Activated naive CD4-positive, alpha-beta T cell treated with anti-CD3 and anti-CD28 coated beads for 36 hours (primary cell): ENCODE measurements at regions of chr7 and their contacts with region 1.

Region 1: GRCh38 chr7:41705109-41705901 is 2.4 kb upstream of the INHBA start:
- DNase-seq: peak; percentile 74
- H3K4me3 Mint-ChIP-seq: peak overlapping the region; percentile 50
- H3K27ac Mint-ChIP-seq: no peak overlapping the region
- H3K4me1 Mint-ChIP-seq: peaks cover 23% of the 10 kb centered on the region
- H3K27me3 Mint-ChIP-seq: peaks cover 66% of the 10 kb centered on the region

Region 2: GRCh38 chr7:40232242-40232893 is 1472.9 kb before region 1 on chr7:
- CTCF ChIA-PET with region 1: interaction called, 5 read pairs
- intact Hi-C with region 1: loop called (anchors 2 kb)
- DNase-seq: peak; percentile 52
- H3K4me3 Mint-ChIP-seq: no peak overlapping the region
- H3K27ac Mint-ChIP-seq: no peak overlapping the region
- H3K4me1 Mint-ChIP-seq: peaks cover 8% of the 10 kb centered on the region
- H3K27me3 Mint-ChIP-seq: no peaks in the 10 kb centered on the region

Region 3: DNA sequence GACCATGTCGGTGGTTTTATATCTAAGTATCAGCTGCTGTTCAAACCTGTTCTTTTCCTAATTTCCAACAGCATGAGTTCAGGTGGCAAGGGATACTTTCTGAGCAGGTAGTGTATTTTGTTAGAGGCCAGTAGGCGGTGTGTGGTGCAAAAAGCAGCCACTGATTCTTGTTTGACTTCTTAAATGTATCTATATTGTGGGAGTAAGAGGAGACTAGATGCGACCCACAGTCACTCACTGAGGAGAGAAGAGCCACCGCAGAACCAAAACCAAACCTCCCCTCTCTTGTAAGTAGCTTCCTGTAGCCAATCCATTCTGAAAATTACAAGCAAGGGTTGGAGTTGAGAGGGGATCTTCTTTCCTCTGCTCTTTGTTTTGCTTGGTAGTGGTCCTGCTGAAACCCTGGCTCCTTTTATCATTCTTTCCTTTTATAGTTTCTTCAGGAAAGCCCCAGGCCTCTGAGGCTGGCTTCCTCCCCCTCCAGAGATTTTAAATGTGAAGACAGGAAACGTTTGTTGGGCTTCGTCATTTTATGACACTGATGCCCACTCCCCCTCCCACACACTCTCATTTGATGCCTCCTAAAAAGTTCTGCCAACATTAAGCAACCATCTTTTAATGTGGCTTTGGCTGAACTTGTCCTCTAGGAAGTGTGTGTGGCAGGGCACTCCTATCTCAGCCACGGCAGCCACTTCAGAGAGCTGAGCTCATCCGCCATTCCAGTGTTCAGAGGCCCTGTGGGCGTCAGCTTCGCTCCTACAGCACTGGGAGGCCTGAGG is 1004.5 kb before region 1 on chr7:
- CTCF ChIA-PET with region 1: no interaction called
- intact Hi-C with region 1: loop called (anchors 10 kb)
- DNase-seq: peak; percentile 57
- H3K4me3 Mint-ChIP-seq: no peak overlapping the region
- H3K27ac Mint-ChIP-seq: peak overlapping the region; percentile 68
- H3K4me1 Mint-ChIP-seq: peaks cover 26% of the 10 kb centered on the region
- H3K27me3 Mint-ChIP-seq: no peaks in the 10 kb centered on the region

Region 4: DNA sequence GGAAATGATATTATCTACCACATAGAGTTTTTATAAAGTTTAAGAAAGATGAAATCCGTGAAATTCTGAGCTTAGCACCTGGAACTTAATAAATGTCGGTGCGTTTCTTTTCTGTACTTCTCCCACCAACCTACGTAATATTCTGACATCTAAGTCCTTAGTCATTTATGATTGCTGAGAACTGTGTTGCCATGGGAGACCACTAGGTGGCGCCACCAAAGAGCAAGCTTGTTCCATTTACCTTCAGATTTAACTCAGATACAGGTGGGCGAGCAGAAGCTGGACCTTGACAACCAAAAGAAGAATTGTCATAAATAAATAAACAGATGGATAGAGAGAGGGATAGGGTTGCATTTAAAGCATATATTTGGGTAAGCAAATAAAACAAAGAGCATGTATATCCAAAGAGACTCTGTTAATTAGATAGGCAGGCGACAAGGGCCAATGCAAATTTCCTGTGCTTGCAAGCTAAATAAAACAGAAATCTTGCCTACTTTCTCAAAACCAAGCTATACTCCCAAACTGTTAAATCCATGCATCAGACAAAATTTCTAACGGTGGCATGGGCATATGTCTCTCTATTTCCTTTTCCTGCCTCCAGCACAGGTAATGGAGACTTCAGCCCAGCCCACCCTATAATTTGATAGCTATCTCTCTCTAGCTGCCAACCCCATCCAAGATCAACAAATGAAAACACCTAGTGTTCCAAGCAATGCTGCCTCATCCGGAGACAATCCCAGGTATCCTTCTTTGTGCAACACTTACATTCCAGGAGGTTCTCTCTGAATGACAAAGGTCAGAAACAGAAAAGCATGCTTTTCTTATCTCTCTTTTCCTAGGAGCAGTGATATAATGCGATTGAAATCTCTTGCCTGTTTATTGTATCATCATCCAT is 702.0 kb before region 1 on chr7:
- CTCF ChIA-PET with region 1: no interaction called
- intact Hi-C with region 1: loop called (anchors 2 kb)
- DNase-seq: peak; percentile 64
- H3K4me3 Mint-ChIP-seq: no peak overlapping the region
- H3K27ac Mint-ChIP-seq: no peak overlapping the region
- H3K4me1 Mint-ChIP-seq: no peaks in the 10 kb centered on the region
- H3K27me3 Mint-ChIP-seq: no peaks in the 10 kb centered on the region

Region 5: GRCh38 chr7:41579961-41580940 is 125.1 kb before region 1 on chr7:
- CTCF ChIA-PET with region 1: no interaction called
- intact Hi-C with region 1: no loop called
- DNase-seq: no peak
- H3K4me3 Mint-ChIP-seq: no peak overlapping the region
- H3K27ac Mint-ChIP-seq: no peak overlapping the region
- H3K4me1 Mint-ChIP-seq: no peaks in the 10 kb centered on the region
- H3K27me3 Mint-ChIP-seq: peaks cover 2% of the 10 kb centered on the region

Region 6: DNA sequence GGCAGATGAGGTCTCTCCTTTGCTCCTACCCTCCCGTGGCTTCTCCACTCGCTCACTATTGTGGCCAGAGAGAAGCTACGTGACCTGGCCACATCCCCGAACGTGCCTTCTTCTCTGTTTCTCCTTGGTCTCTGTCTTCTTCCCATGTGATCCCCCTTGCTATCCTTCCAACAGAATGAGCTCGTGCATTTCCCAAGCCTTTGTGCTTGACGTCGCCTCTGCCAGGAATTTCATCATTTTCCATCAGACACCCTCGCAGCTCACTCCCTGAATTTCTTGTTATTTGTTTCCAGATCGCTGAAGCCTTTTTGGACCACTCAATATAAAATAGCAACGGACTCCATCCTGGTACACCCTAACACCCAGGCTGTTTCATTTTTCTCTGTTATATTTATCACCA is 11.4 kb after region 1 on chr7:
- CTCF ChIA-PET with region 1: interaction called, 21 read pairs
- intact Hi-C with region 1: no loop called
- DNase-seq: no peak
- H3K4me3 Mint-ChIP-seq: no peak overlapping the region
- H3K27ac Mint-ChIP-seq: no peak overlapping the region
- H3K4me1 Mint-ChIP-seq: no peaks in the 10 kb centered on the region
- H3K27me3 Mint-ChIP-seq: peaks cover 4% of the 10 kb centered on the region

Region 7: GRCh38 chr7:41755096-41755495 is 49.8 kb after region 1 on chr7:
- CTCF ChIA-PET with region 1: no interaction called
- intact Hi-C with region 1: no loop called
- DNase-seq: no peak
- H3K4me3 Mint-ChIP-seq: no peak overlapping the region
- H3K27ac Mint-ChIP-seq: no peak overlapping the region
- H3K4me1 Mint-ChIP-seq: no peaks in the 10 kb centered on the region
- H3K27me3 Mint-ChIP-seq: peaks cover 7% of the 10 kb centered on the region

Region 8: GRCh38 chr7:41817386-41817785 is 112.1 kb after region 1 on chr7:
- CTCF ChIA-PET with region 1: no interaction called
- intact Hi-C with region 1: no loop called
- DNase-seq: peak; percentile 23
- H3K4me3 Mint-ChIP-seq: no peak overlapping the region
- H3K27ac Mint-ChIP-seq: no peak overlapping the region
- H3K4me1 Mint-ChIP-seq: peaks cover 18% of the 10 kb centered on the region
- H3K27me3 Mint-ChIP-seq: peaks cover 21% of the 10 kb centered on the region

Region 9: GRCh38 chr7:41828791-41829310 is 123.5 kb after region 1 on chr7:
- CTCF ChIA-PET with region 1: no interaction called
- intact Hi-C with region 1: no loop called
- DNase-seq: no peak
- H3K4me3 Mint-ChIP-seq: no peak overlapping the region
- H3K27ac Mint-ChIP-seq: no peak overlapping the region
- H3K4me1 Mint-ChIP-seq: peaks cover 3% of the 10 kb centered on the region
- H3K27me3 Mint-ChIP-seq: peaks cover 13% of the 10 kb centered on the region